Posterior cingulate gyrus (tissue), 11 donors: ENCODE measurements at regions of chr11 and their contacts with region 1.

Region 1: DNA sequence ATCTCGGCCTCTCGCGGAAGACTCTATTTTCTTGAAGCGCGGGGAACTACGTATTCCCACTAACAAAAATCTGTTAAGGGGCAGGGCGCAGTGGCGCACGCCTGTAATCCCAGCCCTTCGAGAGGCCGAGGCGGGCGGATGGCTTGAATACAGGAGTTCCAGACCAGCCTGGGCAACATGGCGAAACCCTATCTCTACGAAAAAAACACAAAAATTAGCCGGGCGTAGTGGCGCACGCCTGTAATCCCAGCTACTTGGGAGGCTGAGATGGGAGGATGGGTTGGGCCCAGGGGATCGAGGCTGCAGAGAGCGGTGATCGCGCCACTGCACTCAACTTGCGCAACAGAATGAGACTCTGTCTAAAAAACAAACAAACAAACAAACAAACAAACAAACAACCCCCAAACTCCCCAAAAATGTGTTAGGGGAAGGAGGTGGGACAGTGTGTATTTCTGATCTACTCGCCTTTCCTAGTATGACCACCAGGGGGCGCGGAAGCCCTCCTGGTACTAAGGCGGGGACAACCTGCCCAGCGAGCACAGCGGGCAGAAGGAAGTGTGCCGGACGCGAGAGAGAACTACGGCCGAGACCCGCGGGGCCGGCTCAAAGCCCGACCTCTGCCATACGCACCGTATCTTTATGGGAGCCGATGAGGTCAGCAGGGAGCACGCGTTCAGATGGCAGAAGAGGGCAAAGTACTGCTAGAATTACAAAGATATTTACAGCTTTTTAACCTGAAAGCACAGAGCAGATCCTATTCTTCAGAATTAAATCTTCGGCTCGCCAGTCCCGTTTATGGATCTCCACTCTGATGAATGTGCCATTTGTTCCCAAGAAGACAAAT is 1.3 kb upstream of the STX3 start:
- DNase-seq: peak; percentile 76 to 98 (median 90)

Region 2: DNA sequence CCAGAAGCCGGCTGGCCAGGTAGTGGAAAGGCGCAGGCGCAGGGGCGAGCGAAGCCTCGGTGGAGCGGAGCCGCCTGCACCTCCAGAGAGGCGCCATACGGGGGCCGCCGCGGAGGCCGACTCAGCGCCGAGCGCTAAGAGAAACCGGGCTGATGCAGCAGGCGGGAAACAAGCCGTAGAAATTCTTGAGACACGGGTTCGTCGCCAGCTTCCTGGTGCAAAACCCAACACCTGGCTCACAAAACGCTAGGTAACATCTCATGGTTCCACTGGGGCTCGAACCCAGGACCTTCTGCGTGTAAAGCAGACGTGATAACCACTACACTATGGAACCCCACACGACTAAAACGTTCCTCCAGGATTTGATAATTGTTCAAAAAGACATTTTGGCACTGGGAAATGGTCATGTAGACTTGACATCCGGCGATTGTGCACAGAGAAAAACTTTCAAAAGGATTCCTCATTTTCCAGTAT is 203.5 kb before region 1 on chr11:
- intact Hi-C with region 1: loop called (anchors 10 kb)
- DNase-seq: peak; percentile 60 to 97 (median 74)

Region 3: GRCh38 chr11:59615637-59616395 is 138.1 kb before region 1 on chr11 and contains the start of gene OSBP:
- intact Hi-C with region 1: loop called (anchors 10 kb)
- DNase-seq: peak; percentile 98 to 100 (median 100)

Region 4: DNA sequence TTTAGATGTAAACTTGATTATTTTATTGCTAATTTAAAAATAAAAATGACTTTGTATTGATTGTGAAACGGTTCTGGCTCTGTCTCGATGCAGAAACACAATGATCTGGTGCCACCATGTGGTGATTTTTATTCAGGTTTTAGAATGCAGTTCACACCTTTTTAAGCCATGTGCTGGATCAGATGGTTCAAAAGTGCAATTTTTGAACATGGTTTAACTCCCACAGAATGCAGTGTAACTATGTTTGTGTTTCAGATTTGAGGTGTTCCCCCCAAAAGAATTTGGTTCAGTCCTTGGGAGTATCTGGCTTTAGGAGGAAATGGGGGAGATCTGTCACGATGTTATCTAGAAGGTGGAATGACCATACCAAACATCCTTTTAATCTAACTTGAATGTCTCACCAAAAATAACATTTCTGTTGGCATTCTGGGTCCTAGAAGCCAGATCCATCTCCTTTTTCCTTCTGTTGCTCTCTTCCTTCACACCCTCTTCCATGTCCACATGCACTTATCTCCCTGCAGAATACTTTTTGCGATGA is 48.8 kb after region 1 on chr11:
- intact Hi-C with region 1: loop called (anchors 1 kb)
- DNase-seq: peak in 2 of 10 donors; percentile 14 to 17